AG04450 (cell line): ENCODE measurements at regions of chr13 and their contacts with region 1.

Region 1: DNA sequence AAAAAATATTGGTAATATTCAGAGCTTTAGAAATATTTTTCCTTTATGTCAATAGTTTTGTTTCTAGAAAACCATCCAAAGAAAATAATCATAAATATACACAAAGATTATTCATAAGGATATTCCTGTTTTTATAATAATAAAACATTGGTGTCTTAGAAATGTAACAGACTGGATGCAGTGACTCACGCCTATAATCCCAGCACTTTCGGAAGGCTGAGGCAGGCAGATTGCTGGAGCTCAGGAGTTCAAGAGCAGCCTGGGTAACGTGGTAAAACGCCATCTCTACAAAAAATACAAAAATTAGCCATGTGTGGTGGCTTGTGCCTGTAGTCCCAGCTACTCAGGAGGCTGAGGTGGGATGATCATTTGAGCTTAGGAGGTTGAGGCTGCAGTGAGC is 106.8 kb downstream of the DHRS12 start:
- DNase-seq: no peak
- H3K4me3 ChIP-seq: no peak overlapping the region
- H3K27ac ChIP-seq: no peak overlapping the region
- H3K27me3 ChIP-seq: no peaks in the 10 kb centered on the region
- CTCF ChIP-seq: no peak

Region 2: GRCh38 chr13:51444922-51445321 is 252.3 kb before region 1 on chr13:
- CTCF ChIA-PET with region 1: interaction called, 10 read pairs
- POLR2A ChIA-PET with region 1: no interaction called
- DNase-seq: no peak
- H3K4me3 ChIP-seq: no peak overlapping the region
- H3K27ac ChIP-seq: no peak overlapping the region
- H3K27me3 ChIP-seq: no peaks in the 10 kb centered on the region
- CTCF ChIP-seq: peak; percentile 53